ENCODE measurements at regions of chr6 and their contacts with region 1.

Region 1: DNA sequence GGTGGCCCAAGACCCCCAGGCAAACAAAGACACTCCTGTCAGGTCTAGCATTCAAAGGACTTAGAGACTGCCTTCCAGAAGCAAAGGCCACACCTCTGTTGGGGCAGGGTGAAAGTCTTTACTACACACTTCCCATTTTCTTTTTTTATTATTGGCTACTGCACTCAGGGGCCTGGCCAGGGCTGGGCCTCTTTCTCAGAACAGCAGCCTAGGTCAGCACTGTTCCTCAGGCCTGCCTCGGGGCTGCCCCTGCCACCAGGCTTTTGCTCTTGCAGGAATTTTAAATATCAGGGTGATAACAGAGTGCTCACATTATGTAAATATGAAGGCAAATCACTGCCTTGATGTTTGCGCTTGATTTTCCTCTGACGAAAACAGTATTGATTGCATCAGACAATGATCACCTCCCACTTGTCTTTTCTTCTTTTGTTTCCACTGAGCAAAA is 18.5 kb downstream of the GSTA4 start:
- DNase-seq: no peak
- H3K4me3 ChIP-seq: no peak overlapping the region
- H3K27ac ChIP-seq: no peak overlapping the region
- H3K4me1 ChIP-seq: no peaks in the 10 kb centered on the region
- H3K27me3 ChIP-seq: peaks cover 4% of the 10 kb centered on the region
- CTCF ChIP-seq: no peak

Region 2: GRCh38 chr6:52881996-52882841 is 94.4 kb before region 1 on chr6:
- CTCF ChIA-PET with region 1: no interaction called
- dilution Hi-C with region 1: no loop called
- in situ Hi-C with region 1: no loop called
- intact Hi-C with region 1: loop called (anchors 5 kb)
- DNase-seq: peak; percentile 70
- H3K4me3 ChIP-seq: peak overlapping the region; percentile 39 to 57 (median 49)
- H3K27ac ChIP-seq: no peak overlapping the region
- H3K4me1 ChIP-seq: peaks cover 5% of the 10 kb centered on the region
- H3K27me3 ChIP-seq: peaks cover 13% of the 10 kb centered on the region
- CTCF ChIP-seq: peak; percentile 71 to 86